Mammary epithelial cell (primary cell): ENCODE measurements at regions of chr17 and their contacts with region 1.

Region 1: DNA sequence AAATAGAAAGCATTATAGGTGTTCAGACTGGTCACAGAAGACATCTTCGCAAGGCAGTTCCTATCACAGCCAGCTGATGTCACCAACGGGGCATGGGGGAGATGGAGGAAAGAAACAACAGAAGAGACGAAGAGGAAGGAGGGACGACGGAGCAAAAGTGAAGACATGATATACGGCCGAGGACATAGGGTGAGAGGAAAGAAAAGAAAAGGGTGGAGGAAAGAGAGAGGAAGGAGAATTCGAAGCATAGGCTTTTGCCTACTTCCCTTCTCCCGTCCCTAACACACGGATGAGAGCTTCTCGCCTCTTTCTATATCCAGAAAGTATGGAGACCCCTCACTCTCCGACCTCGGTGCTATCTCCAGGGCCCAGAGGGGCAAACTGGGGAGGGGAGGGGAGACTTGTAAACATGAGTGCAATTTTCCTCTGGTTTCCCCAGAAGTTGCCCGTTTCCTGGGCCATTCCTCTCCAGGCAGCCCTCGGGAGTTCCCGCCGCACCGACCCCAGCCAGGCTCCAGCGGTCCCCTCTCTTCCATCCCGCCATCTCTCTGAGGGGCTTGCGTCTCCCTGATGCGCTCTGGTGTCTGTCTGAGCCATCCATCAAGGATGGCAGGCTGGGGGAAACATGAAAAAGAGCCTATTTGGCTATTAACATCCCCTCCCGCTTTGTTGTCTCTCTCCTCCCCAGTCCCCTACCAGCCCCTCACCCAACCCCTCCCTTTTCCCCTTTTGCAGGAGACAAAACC is 26.0 kb downstream of the COPZ2 start:
- DNase-seq: peak; percentile 39
- H3K4me3 ChIP-seq: peak overlapping the region; percentile 18 to 30 (median 22)
- H3K27ac ChIP-seq: no peak overlapping the region
- H3K4me1 ChIP-seq: peaks cover 8% of the 10 kb centered on the region
- H3K27me3 ChIP-seq: no peaks in the 10 kb centered on the region
- CTCF ChIP-seq: peak; percentile 44 to 70

Region 2: DNA sequence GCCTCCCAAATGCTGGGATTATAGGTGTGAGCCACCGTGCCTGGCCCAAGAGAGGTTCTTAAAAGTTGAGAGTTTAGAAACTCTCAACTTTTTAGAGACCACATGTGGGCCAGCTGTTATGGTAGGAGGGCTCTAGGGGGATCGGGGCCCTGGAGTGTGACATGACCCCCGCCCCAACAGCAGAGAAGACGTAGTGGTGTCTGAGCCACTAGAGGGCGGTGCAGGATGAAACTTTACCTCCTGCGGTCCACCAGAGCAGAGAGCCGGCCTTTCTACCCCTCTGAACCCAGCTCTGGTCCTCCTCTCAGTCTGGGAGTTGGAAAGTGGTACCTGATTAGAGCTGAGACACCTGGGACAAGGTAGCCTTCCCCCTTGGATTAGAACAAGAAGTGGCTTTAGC is 33.3 kb before region 1 on chr17:
- CTCF ChIA-PET with region 1: no interaction called
- dilution Hi-C with region 1: no loop called
- in situ Hi-C with region 1: loop called (anchors 5 kb)
- intact Hi-C with region 1: no loop called
- DNase-seq: peak; percentile 26
- H3K4me3 ChIP-seq: no peak overlapping the region
- H3K27ac ChIP-seq: no peak overlapping the region
- H3K4me1 ChIP-seq: no peaks in the 10 kb centered on the region
- H3K27me3 ChIP-seq: no peaks in the 10 kb centered on the region
- CTCF ChIP-seq: peak; percentile 57 to 73

Region 3: DNA sequence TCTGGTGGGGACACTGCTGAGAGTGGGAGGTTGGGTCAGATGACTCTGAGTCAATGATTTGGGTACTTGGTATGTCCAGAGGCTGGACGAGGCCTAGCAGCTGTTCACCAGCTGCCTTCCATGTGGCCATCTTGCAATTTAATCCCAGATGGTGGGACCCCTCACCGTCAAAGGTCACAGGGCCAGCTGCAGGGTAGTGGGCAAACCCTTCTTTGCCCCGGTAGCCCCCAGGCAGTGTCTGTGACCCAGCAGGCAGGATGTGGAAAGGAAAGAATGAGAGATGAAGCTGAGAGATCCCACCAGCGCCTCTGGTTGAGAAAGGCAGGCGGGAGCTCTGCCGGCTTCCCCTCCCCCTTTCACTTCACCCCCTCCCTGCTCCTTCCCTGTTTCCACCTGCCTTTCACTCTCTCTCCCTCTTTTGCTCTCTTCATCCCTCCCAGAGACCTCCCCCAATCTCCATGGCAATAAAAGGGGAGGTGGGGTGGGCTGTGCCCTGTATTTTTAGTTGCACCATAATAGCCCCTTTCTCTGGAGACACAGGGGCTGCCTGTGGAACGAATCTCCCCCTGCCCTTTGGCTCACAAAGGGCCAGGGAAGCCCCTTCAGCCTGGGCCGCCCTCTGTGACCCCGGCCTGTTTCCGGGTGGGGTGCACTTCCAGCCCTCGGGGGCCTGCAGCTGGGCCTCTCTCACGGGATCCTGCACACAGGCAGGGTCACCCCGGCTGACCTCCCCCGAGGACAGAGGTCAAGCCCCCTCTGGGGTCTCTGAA is 20.4 kb before region 1 on chr17:
- CTCF ChIA-PET with region 1: no interaction called
- dilution Hi-C with region 1: no loop called
- in situ Hi-C with region 1: no loop called
- intact Hi-C with region 1: loop called (anchors 1 kb)
- DNase-seq: no peak
- H3K4me3 ChIP-seq: no peak overlapping the region
- H3K27ac ChIP-seq: no peak overlapping the region
- H3K4me1 ChIP-seq: no peaks in the 10 kb centered on the region
- H3K27me3 ChIP-seq: no peaks in the 10 kb centered on the region
- CTCF ChIP-seq: no peak